ENCODE measurements at regions of chr1 and their contacts with region 1.

Region 1: DNA sequence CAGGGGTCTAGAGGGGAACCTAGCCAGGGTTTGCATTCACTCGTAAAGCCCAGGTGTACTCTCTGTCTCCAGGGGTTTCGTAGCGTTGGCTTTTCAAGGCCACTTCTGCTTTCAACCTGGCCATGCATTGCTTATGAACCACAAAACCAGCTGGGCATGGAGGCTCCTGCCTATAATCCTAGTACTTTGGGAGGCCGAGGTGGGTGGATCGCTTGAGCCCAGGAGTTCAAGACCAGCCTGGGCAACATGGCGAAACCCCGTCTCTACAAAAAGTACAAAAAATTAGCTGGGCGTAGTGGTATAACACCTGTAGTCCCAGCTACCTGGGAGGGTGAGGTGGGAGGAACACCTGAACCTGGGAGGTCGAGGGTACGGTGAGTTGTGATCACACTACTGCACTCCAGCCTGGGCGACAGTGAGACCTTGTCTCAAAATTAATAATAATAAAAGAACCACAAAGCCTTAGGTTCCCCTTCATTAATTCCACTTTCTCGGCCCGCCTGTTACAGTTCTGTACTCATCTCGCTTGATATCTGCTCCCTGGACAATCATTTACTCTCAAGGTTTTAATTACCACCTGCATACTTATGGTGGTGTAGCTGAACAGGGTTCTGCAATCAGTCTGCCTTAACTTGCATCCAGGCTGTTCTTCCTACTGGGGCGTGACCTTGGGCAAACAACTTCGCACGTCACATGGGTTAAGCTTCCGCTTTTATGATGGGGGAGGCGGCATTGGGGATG is 6.1 kb downstream of the SLC16A4 start:
- DNase-seq: no peak
- H3K4me3 ChIP-seq: no peak overlapping the region
- H3K27ac ChIP-seq: no peak overlapping the region
- H3K4me1 ChIP-seq: peaks cover 7% of the 10 kb centered on the region
- H3K27me3 ChIP-seq: no peaks in the 10 kb centered on the region
- CTCF ChIP-seq: no peak
- POLR2A ChIP-seq: no peak

Region 2: GRCh38 chr1:110347182-110347893 is 37.4 kb before region 1 on chr1:
- CTCF ChIA-PET with region 1: no interaction called
- POLR2A ChIA-PET with region 1: no interaction called
- dilution Hi-C with region 1: no loop called
- intact Hi-C with region 1: loop called (anchors 5 kb)
- DNase-seq: no peak
- H3K4me3 ChIP-seq: no peak overlapping the region
- H3K27ac ChIP-seq: no peak overlapping the region
- H3K4me1 ChIP-seq: peaks cover 13% of the 10 kb centered on the region
- H3K27me3 ChIP-seq: no peaks in the 10 kb centered on the region
- CTCF ChIP-seq: no peak
- POLR2A ChIP-seq: no peak

Region 3: GRCh38 chr1:110535985-110536384 is 151.2 kb after region 1 on chr1:
- CTCF ChIA-PET with region 1: no interaction called
- POLR2A ChIA-PET with region 1: no interaction called
- dilution Hi-C with region 1: no loop called
- intact Hi-C with region 1: no loop called
- DNase-seq: no peak
- H3K4me3 ChIP-seq: no peak overlapping the region
- H3K27ac ChIP-seq: no peak overlapping the region
- H3K4me1 ChIP-seq: no peaks in the 10 kb centered on the region
- H3K27me3 ChIP-seq: no peaks in the 10 kb centered on the region
- CTCF ChIP-seq: no peak
- POLR2A ChIP-seq: no peak